Activated T-helper 2 cell treated with anti-CD3 and anti-CD28 coated beads, Interferon-gamma antibody, Interleukin-2, Interleukin-4, amounts not matched to agents 10 μg/mL and 5 μg/mL and 100 μg/mL, durations not matched to agents 14 hours and 24 hours and 36 hours (primary cell): ENCODE measurements at regions of chr5 and their contacts with region 1.

Region 1: DNA sequence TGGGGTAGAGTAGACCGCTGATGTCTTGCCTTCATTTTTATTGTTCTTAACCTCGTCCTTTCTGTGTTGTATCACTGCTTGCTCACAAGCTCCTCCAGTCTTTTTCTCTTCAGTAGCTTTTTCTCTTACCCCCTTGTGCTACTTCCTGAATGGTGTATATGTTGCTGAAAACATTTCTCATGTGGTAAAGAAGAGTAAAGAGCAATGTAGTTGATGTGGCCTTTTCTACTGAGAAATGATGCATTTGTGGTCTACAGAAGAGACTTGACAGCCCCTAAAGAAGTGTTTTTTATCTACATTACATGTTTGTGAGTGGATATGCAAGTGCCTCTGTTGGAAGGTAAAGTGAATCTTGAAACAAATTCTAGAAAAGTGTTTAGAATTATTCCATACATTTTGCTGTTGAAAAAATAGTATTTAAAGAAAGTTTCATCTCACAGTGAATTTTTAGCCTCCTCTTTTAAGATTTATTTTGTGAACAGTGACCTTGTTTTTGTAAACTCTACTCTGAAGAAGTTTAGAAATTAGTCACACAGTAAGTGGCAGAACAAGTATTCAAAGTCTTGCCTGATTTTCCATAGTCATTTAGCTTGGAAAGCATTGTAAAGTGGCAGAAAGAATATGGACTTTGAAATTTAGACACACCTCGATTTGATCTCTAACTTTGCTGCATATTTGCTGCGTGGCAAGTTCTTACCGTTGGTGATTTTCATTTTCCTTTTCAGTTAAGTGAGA is 17.4 kb downstream of the CDC42SE2 start:
- DNase-seq: no peak
- H3K4me3 Mint-ChIP-seq: peak overlapping the region; percentile 82
- H3K27ac Mint-ChIP-seq: peak overlapping the region; percentile 96
- H3K4me1 Mint-ChIP-seq: peaks cover 78% of the 10 kb centered on the region
- H3K27me3 Mint-ChIP-seq: no peaks in the 10 kb centered on the region

Region 2: DNA sequence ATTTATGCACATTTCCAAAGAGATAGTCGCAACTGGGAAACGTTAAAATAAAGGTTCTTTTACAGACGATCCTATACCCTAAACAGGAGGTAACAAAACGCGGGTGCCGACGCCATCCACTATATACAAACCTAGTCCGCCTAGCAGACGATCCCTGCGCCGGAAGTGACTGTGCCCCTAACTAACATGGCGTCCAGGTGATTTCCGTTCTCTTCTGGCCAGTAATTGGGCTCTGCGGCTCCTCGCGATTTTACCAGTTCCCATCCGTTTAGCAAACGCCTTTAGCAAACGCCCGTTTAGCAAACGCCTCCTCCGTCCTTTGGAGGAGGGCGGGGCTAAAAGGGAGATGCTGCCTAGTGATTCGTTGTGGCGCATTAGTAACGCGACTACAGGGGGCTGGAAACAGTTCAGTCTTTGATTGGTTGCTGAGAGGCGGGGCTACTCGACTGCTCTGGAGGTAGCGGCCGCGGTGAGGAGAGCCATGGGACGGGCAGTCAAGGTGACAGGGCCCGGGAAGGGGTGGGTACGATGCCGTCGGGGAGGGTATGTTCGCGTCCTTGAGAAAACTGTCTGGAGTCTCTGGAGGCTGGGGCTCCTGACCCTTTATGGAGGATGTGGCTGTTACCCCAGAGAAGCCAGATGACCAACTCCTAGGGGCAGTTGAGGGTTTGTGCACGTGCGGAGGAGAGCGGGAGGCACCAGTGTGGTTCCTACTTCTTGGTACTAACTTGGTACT is 110.6 kb before region 1 on chr5 and contains the start of gene LYRM7:
- intact Hi-C with region 1: loop called (anchors 1 kb)
- DNase-seq: peak; percentile 97
- H3K4me3 Mint-ChIP-seq: peak within 1 kb of the TSS; percentile 99
- H3K27ac Mint-ChIP-seq: peak within 1 kb of the TSS; percentile 95
- H3K4me1 Mint-ChIP-seq: peaks cover 34% of the 10 kb centered on the region
- H3K27me3 Mint-ChIP-seq: no peaks in the 10 kb centered on the region
- total RNA-seq, gene LYRM7: 14.0 and 20.3 TPM in 2 replicates

Region 3: GRCh38 chr5:131259326-131259725 is 22.0 kb before region 1 on chr5:
- intact Hi-C with region 1: no loop called
- DNase-seq: no peak
- H3K4me3 Mint-ChIP-seq: no peak overlapping the region
- H3K27ac Mint-ChIP-seq: peak overlapping the region; percentile 81
- H3K4me1 Mint-ChIP-seq: peaks cover 54% of the 10 kb centered on the region
- H3K27me3 Mint-ChIP-seq: no peaks in the 10 kb centered on the region

Region 4: DNA sequence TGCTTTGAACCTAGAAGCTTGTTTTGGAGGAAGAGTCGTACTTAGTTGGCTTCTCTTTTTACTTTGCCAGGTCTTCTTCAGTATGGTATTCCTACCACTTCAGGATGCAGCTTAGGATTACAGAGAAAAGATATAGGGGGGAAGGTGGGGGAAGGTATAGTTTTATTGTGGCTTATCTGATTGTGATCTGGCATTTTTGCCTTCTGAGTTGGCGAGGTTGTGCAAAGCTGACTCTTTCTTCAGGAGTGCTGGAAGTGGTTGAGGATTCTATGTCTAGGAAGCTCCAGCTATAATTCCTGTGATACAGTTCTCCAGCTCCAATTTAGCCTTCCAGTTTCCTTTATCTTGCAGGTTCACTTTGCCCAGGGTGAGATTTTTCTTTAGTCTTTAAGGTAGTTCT is 10.5 kb before region 1 on chr5:
- intact Hi-C with region 1: loop called (anchors 1 kb)
- DNase-seq: no peak
- H3K4me3 Mint-ChIP-seq: peak overlapping the region; percentile 78
- H3K27ac Mint-ChIP-seq: peak overlapping the region; percentile 74
- H3K4me1 Mint-ChIP-seq: peaks cover 49% of the 10 kb centered on the region
- H3K27me3 Mint-ChIP-seq: no peaks in the 10 kb centered on the region

Region 5: GRCh38 chr5:131394128-131394527 is 112.8 kb after region 1 on chr5:
- intact Hi-C with region 1: loop called (anchors 1 kb)
- DNase-seq: peak; percentile 45
- H3K4me3 Mint-ChIP-seq: peak overlapping the region; percentile 63
- H3K27ac Mint-ChIP-seq: peak overlapping the region; percentile 94
- H3K4me1 Mint-ChIP-seq: peaks cover 67% of the 10 kb centered on the region
- H3K27me3 Mint-ChIP-seq: no peaks in the 10 kb centered on the region

Region 6: DNA sequence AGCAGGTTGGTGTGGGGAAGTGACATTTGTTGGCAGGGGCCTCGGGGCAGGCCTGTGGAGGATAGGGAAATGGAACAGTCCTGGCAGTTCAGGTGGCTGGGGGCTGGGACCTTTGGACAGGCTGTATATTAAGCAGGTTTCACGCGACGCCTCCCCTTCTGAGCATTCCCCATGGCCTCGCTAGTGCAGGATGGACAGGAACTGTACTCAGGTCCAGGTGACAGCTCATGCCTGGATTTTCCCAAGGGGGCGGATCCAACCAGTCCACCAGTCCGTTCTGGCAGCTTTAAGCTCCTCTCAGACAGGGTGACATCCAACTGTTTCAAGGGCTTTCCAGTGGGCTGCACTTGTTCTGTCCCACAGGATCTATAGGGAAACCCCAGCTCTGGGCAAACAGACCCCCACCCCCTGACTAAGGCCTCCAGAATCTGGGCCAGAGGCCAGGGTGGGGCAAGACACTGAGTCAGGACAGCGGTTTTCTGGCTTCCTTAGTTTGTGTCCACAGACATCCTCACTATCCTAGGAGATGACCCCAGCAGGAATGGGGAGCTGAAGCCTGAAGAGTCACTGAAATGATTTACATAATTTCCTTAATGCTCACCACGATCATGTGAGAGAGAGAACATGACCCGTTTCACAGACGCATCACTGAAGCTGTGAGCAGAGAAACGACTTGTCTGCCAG is 813.2 kb after region 1 on chr5:
- intact Hi-C with region 1: loop called (anchors 5 kb)
- DNase-seq: no peak
- H3K4me3 Mint-ChIP-seq: no peak overlapping the region
- H3K27ac Mint-ChIP-seq: peak overlapping the region; percentile 77
- H3K4me1 Mint-ChIP-seq: peaks cover 70% of the 10 kb centered on the region
- H3K27me3 Mint-ChIP-seq: no peaks in the 10 kb centered on the region